Calu3 (cell line): ENCODE measurements at regions of chr14 and their contacts with region 1.

Region 1: DNA sequence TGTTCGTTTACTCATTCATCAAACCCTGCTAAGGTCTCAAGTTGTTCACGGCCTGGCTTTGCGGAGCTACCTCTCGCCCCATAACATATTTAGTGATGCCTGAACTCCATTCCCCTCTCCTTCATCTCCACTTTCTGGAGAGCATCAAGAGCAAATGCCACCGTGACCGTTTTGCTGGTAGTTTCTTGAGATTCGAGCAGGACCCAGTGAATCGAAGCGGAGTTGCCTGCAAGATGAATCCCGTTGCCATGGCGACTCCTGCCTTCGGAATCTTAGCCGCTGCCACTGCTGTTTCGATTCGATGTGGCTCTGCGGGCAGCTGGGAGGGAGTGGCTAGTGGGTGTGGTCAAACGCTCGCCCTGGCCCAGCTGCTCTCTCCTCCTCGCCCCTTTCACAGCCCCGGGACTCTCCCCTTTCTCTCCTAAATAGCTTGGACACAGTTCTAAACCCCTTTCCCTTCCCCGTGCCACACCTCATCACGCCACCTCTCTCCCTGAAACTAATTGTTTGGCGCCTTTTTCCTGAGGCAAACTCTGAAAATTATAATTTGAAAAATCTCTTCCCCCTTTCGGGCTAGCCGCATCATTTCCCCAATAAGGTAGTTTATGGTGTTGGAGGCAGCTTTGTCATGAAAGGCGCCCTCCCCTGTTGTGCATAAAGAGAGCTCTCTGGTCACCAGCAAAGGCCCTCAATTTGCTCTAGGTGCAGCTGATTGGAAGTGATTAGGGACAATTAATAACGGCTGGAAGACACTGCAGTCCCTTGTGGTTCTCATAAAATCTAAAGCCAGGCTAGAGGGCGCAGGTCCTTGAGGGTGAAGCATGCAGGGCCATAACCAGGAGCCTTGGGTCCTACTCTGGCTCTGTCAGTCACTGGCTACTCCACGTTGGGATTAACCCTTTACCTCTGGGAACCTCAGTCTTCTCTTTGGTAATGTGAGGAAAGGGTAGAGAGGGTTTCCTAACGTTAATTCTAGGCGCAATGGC is 1.6 kb downstream of the DAAM1 start:
- DNase-seq: peak; percentile 84
- H3K4me3 Mint-ChIP-seq: peak overlapping the region; percentile 97
- H3K27ac Mint-ChIP-seq: peak overlapping the region; percentile 27
- H3K4me1 Mint-ChIP-seq: peaks cover 10% of the 10 kb centered on the region
- H3K27me3 Mint-ChIP-seq: peaks cover 23% of the 10 kb centered on the region
- CTCF ChIP-seq: no peak

Region 2: GRCh38 chr14:58864751-58865513 is 325.1 kb before region 1 on chr14:
- CTCF ChIA-PET with region 1: no interaction called
- intact Hi-C with region 1: no loop called
- DNase-seq: no peak
- H3K4me3 Mint-ChIP-seq: no peak overlapping the region
- H3K27ac Mint-ChIP-seq: no peak overlapping the region
- H3K4me1 Mint-ChIP-seq: no peaks in the 10 kb centered on the region
- H3K27me3 Mint-ChIP-seq: peaks cover 16% of the 10 kb centered on the region
- CTCF ChIP-seq: no peak

Region 3: GRCh38 chr14:58942516-58942915 is 247.6 kb before region 1 on chr14:
- CTCF ChIA-PET with region 1: no interaction called
- intact Hi-C with region 1: no loop called
- DNase-seq: no peak
- H3K4me3 Mint-ChIP-seq: no peak overlapping the region
- H3K27ac Mint-ChIP-seq: no peak overlapping the region
- H3K4me1 Mint-ChIP-seq: no peaks in the 10 kb centered on the region
- H3K27me3 Mint-ChIP-seq: peaks cover 77% of the 10 kb centered on the region
- CTCF ChIP-seq: no peak

Region 4: DNA sequence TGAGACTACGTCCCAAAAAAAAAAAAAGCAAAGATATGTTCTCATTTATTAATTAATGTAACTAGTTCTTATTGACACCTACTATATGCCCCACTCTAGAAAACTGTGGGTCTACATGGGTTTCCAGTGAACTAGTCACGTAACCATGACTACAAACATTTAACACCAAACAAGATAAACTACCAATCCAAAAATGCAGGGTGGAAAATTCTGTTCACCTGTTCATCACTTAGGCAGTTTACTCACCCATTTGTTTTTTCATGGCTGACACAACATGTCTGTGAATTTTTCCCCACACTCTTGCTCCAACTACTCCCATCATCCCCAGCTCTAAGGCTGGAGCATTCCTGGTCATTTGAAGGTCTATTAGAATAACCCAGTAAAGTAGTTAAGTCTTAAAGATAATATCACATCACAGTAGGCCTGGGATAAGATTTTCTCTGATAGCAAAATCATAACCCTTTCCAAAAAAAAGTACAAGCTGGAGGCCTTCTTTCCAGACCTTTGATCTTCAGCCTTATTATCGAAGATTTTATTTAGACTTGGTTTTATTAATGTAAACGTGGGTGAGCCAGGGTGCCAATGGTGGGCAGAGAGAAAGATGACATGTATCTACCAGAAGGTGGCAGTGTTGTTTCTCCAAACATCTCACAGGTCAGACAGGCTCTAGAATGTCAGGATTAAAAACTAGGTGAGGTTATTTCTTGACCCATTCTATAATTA is 63.2 kb before region 1 on chr14:
- CTCF ChIA-PET with region 1: no interaction called
- intact Hi-C with region 1: loop called (anchors 5 kb)
- DNase-seq: peak; percentile 26
- H3K4me3 Mint-ChIP-seq: no peak overlapping the region
- H3K27ac Mint-ChIP-seq: no peak overlapping the region
- H3K4me1 Mint-ChIP-seq: no peaks in the 10 kb centered on the region
- H3K27me3 Mint-ChIP-seq: no peaks in the 10 kb centered on the region
- CTCF ChIP-seq: peak; percentile 36

Region 5: DNA sequence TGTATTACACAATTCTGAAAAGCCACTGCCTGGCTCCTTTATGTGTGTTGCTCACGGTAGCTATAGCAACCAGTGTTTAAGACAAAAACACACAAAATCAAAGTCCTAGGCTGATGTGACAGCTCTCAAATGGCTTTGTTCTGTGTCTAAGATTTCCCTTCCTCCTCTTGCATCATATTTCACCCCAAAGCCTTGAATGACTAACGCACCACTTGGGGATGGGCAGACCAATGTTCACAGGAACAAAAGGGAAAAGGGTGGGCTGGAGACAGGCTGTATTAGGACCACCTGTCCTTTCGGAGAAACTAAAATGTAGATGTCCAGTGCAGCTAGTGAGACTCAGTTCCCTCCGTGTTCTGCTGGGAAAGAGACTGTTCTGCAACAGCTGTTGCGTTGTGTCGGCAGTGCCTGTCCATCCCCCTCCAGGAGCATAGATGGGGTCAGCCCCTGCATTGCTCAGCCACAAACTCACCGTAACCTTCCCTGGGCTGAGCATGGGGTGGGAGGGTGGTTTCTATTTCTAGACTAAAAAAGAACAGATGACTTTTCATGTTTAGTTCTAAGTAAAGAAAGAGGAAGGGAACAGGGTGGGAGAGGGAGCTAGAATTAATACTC is 28.4 kb before region 1 on chr14:
- CTCF ChIA-PET with region 1: no interaction called
- intact Hi-C with region 1: loop called (anchors 2 kb)
- DNase-seq: peak; percentile 36
- H3K4me3 Mint-ChIP-seq: no peak overlapping the region
- H3K27ac Mint-ChIP-seq: peak overlapping the region; percentile 77
- H3K4me1 Mint-ChIP-seq: peaks cover 9% of the 10 kb centered on the region
- H3K27me3 Mint-ChIP-seq: no peaks in the 10 kb centered on the region
- CTCF ChIP-seq: no peak

Region 6: DNA sequence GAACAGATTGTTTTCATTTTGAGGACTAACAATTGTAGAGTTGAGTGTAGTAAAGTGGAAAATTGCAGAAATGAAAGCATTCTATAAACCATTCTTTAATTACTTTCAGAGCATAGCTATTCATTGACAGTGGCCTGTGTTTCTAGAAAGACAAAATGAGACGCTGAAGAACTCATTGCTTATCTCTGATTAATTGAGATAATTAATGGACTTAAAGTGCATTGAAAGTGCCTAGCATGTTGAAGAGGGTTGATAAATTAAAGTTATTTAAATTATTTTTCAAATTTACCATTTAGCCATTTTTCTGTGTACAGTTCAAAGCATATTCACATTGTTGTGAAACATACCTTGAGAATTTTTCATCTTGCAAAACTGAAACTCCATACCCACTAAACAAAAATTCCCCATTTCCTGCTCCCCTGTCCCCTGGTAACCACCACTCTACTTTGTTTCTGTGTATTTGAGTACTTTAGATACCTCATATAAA is 55.8 kb after region 1 on chr14:
- CTCF ChIA-PET with region 1: no interaction called
- intact Hi-C with region 1: no loop called
- DNase-seq: no peak
- H3K4me3 Mint-ChIP-seq: no peak overlapping the region
- H3K27ac Mint-ChIP-seq: no peak overlapping the region
- H3K4me1 Mint-ChIP-seq: peaks cover 22% of the 10 kb centered on the region
- H3K27me3 Mint-ChIP-seq: no peaks in the 10 kb centered on the region
- CTCF ChIP-seq: no peak

Region 7: DNA sequence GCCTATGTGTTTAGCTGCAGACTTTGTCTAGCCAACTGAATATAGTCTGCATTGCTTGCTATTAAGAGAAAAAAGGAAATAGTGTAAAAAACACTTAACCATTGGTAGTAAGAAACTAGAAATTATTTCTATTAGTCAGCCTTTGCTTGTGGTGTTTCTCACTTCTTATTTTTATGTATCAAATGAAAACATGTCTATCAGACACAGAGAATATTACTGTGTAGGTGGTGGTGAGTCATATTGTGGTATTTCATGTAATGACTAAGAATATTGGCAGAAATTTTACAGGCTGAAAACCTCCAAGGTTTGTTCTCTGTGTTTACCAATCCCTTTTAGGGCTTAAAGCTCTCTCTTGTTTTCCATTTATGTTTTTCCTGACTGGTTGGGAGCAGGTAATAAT is 85.6 kb after region 1 on chr14:
- CTCF ChIA-PET with region 1: interaction called, 3 read pairs
- intact Hi-C with region 1: loop called (anchors 1 kb)
- DNase-seq: no peak
- H3K4me3 Mint-ChIP-seq: peak overlapping the region; percentile 22
- H3K27ac Mint-ChIP-seq: peak overlapping the region; percentile 88
- H3K4me1 Mint-ChIP-seq: peaks cover 49% of the 10 kb centered on the region
- H3K27me3 Mint-ChIP-seq: no peaks in the 10 kb centered on the region
- CTCF ChIP-seq: no peak

Region 8: GRCh38 chr14:59360923-59361794 is 171.1 kb after region 1 on chr14:
- CTCF ChIA-PET with region 1: no interaction called
- intact Hi-C with region 1: loop called (anchors 1 kb)
- DNase-seq: peak; percentile 81
- H3K4me3 Mint-ChIP-seq: peak overlapping the region; percentile 55
- H3K27ac Mint-ChIP-seq: peak overlapping the region; percentile 79
- H3K4me1 Mint-ChIP-seq: peaks cover 46% of the 10 kb centered on the region
- H3K27me3 Mint-ChIP-seq: no peaks in the 10 kb centered on the region
- CTCF ChIP-seq: no peak

Region 9: DNA sequence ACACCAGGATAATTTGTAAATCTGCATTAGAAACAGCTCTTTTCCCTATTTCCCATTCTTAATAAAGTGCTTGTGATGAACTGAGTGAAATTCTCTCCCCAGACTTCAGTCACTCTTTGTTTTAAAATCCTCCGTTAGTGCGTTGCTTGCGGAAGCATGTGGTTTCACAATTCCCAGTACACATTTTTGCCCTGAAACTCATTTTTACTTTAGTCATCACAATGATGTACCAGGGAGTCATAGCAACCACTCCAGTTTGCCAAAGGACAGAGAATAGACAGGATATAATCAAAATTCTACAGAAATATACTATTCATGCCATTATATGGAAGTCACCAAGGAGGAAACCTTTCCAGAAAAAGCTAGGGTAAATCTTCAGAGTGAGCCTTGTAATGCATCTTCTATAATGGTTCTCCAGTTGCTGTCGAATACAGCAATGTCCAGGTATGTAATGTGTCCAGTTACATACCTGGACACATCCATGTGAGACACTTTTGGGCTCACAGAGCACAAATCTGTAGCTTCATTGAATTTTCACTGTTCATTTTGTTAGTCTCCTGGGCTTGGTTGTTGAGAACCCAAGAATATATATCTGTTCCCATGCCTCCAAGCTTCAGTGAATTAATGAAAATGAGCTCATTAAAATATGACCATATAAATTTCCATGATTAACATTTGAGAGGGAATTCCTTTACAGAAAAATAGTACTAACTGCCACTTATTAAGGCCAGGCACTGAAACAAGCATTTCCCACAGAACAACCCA is 217.3 kb after region 1 on chr14:
- CTCF ChIA-PET with region 1: no interaction called
- intact Hi-C with region 1: no loop called
- DNase-seq: no peak
- H3K4me3 Mint-ChIP-seq: no peak overlapping the region
- H3K27ac Mint-ChIP-seq: no peak overlapping the region
- H3K4me1 Mint-ChIP-seq: no peaks in the 10 kb centered on the region
- H3K27me3 Mint-ChIP-seq: no peaks in the 10 kb centered on the region
- CTCF ChIP-seq: no peak

Region 10: GRCh38 chr14:59422069-59422881 is 232.2 kb after region 1 on chr14:
- CTCF ChIA-PET with region 1: no interaction called
- intact Hi-C with region 1: loop called (anchors 5 kb)
- DNase-seq: no peak
- H3K4me3 Mint-ChIP-seq: no peak overlapping the region
- H3K27ac Mint-ChIP-seq: no peak overlapping the region
- H3K4me1 Mint-ChIP-seq: no peaks in the 10 kb centered on the region
- H3K27me3 Mint-ChIP-seq: no peaks in the 10 kb centered on the region
- CTCF ChIP-seq: no peak

Region 11: DNA sequence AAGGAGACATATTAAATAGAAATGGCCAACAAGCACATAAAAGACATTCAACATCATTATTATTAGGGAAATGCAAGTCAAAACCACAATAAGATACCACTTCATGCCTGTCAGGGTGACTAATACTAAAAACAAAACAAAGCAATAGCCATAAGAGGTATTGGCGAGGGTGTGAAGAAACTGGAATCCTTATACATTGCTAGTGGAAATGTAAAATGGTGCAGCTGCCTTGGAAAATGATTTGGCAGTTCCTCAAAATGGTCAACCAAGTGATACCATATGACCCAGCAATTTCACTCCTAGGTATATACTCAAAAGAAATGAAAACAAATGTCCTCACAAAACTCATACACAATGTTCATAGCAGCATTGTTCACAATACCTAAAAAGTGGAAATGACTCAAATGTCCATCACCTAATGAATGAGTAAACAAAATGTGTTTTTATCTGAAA is 248.1 kb after region 1 on chr14:
- CTCF ChIA-PET with region 1: interaction called, 3 read pairs
- intact Hi-C with region 1: loop called (anchors 5 kb)
- DNase-seq: no peak
- H3K4me3 Mint-ChIP-seq: no peak overlapping the region
- H3K27ac Mint-ChIP-seq: no peak overlapping the region
- H3K4me1 Mint-ChIP-seq: no peaks in the 10 kb centered on the region
- H3K27me3 Mint-ChIP-seq: no peaks in the 10 kb centered on the region
- CTCF ChIP-seq: no peak